ENCODE measurements at regions of chr3 and their contacts with region 1.

Region 1: DNA sequence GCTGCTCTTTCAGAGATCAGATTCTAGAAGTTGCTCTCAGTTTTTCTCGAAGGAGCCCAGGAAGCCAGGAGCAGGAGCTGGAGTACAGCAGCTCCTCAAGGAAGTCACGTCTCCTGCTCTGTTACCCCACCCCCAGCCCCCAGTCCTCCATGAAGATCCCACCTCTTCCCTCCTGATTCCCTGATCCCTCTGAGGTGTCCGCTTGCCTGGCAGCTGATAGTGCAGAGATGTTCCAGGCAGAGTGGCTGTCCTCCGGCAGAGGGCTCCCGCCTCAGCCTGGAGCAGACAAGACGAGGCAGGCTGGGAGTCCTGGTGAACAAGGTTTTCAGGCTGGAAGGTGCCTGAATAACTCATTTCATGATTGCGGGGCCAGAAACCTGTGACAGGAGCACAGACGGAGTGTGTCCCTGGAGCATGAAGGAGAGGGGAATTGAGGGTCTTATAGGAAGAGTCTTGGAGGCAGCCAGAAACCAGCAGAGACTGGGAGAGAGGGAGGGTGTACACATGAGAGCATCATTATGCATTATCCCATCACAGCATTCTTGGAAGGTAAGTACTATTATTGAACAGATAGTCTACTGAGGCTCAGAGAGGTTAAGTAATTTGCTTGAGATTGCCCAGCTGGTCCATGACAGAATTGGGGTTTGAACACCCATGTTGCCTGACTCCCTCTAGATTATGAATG is 1.2 kb downstream of the HRH1 start:
- DNase-seq: peak; percentile 73 to 79
- ATAC-seq: peak; percentile 82 to 91 (median 90)
- H3K4me3 ChIP-seq: peak overlapping the region; percentile 67
- H3K27ac ChIP-seq: no peak overlapping the region
- H3K4me1 ChIP-seq: no peaks in the 10 kb centered on the region
- H3K27me3 ChIP-seq: peaks cover 0 to 56% (median 8%) of the 10 kb centered on the region in 3 donors
- CTCF ChIP-seq: peak; percentile 58

Region 2: DNA sequence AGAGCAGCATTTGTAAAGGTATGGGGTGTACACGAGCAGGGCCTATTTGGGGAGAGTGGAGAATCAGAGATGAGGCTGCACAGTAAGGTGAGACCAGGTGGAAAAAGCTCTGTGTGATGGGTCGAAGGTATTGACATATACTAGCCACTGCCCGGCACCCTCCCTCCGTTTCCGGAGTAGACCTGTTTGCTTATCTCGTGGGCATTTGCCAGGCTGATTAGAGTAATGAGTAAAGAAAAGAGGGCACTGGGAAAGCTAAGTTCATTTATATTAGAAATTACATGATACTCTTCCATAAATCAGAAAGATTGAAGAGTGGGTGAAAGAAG is 70.5 kb after region 1 on chr3:
- intact Hi-C with region 1: loop called in 1 of 2 experiments (anchors 5 kb)
- DNase-seq: no peak
- ATAC-seq: peak in 1 of 4 donors; percentile 21
- H3K4me3 ChIP-seq: no peak overlapping the region
- H3K27ac ChIP-seq: peak overlapping the region; percentile 46
- H3K4me1 ChIP-seq: no peaks in the 10 kb centered on the region
- H3K27me3 ChIP-seq: no peaks in the 10 kb centered on the region
- CTCF ChIP-seq: no peak

Region 3: GRCh38 chr3:11288786-11289682 is 133.6 kb after region 1 on chr3:
- intact Hi-C with region 1: loop called in 1 of 2 experiments (anchors 5 kb)
- DNase-seq: no peak
- ATAC-seq: peak; percentile 84 to 89 (median 87)
- H3K4me3 ChIP-seq: no peak overlapping the region
- H3K27ac ChIP-seq: peak overlapping the region; percentile 82
- H3K4me1 ChIP-seq: peaks cover 31% of the 10 kb centered on the region
- H3K27me3 ChIP-seq: no peaks in the 10 kb centered on the region
- CTCF ChIP-seq: no peak